ENCODE measurements at regions of chr12 and their contacts with region 1.

Region 1: GRCh38 chr12:14167005-14167628 is 185.7 kb upstream of the GRIN2B start:
- ATAC-seq: peak; percentile 40 to 65 (median 51)
- H3K4me3 ChIP-seq: no peak overlapping the region
- H3K27ac ChIP-seq: no peak overlapping the region
- H3K4me1 ChIP-seq: no peaks in the 10 kb centered on the region

Region 2: DNA sequence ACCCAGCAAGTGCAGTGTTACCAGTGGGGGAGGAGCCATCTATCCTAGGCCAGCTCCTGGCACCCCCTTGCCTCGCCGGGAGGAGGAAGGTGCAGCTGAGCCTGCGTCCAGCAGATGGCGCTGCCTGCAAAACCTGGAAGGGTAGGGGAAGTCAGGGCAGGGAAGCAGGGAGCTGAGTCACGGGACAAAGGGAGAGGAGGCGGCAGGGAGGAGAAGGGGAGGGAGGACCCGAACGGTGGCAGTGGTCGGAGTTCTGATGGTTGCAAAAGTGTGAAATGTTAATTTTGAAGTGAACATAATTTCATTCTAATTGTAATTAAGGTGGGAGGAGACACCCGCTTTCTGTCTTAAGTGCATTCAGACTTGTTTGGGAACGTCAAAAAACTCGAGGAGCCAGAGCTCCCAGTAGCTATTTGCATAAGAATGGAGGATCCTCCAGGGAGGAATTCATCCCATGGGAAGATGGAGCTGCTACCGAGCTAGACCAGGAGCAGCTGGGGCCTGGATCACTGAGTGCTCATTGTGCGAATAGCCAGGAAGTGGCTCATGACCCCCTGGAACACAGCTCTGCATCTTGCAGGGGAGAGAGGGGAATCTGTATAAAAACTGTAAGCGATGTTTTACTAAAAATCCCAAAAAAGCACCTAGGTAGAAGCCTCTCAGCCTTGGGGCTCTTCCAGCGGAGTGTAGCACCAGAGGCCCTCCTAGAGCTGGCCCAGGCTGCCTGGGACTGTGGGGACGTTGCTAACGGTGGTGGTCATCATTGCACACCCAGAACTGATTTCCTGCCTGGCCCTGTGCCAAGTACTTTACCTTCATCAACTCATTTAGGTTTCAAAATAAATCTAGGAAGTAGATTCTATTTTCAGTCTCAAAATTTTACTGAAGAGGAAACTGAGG is 911.1 kb before region 1 on chr12:
- in situ Hi-C with region 1: loop called in 1 of 9 experiments (anchors 25 kb)
- ATAC-seq: peak; percentile 95 to 100 (median 98)
- H3K4me3 ChIP-seq: peak overlapping the region; percentile 8 to 33 (median 27)
- H3K27ac ChIP-seq: peak overlapping the region; percentile 40 to 58
- H3K4me1 ChIP-seq: peaks cover 17 to 29% of the 10 kb centered on the region in 2 donors

Region 3: DNA sequence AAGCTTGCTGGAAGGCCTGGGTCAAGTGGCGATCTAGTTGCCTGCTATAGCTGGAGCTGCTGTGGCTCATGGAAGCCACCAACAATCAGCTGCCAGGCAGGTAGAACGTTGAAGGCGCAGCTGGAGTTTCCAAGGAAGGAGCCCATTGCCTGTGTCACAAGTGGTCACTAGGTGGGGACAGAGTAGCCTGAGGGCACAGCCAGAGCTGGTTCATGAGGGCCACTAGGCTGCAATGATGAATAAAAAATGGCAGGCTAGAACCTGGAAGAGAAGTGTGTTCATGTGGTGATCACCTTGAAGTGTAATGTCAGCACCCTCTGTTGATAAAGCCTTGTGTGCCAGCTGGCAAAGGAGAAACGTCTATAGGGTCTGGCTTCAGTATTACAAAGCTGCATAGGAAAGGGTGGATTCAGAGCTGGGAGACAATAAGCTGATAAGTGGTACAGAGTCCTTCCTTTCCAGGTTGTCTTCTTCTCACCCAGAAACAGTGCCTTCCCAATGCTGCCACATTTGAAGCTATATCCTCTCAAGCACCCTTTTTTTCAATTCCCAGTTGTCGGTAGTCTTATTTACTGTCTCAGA is 804.8 kb before region 1 on chr12:
- in situ Hi-C with region 1: no loop called
- ATAC-seq: peak in 5 of 8 experiments; percentile 41 to 97 (median 87)
- H3K4me3 ChIP-seq: no peak overlapping the region
- H3K27ac ChIP-seq: no peak overlapping the region
- H3K4me1 ChIP-seq: no peaks in the 10 kb centered on the region

Region 4: DNA sequence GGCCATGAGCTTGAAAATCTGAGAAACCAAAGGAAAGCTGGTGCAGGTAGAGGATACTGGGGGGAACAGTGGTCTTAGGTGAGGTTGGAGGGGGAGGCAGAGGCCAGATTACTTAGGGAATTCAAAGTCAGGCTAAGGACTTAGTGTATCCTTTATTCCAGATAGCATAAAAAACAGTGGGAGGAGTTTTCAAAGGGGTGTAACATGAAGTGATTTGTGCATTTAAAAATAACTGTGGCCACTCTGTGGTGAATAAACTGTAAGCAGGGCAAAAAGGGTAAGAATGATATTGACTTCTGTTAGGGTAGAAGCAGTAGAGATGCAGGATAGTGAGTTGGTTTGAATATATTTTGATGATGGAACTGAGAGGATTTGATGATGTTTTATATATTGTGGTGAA is 657.4 kb before region 1 on chr12:
- in situ Hi-C with region 1: no loop called
- ATAC-seq: peak in 2 of 8 experiments; percentile 55 to 67
- H3K4me3 ChIP-seq: no peak overlapping the region
- H3K27ac ChIP-seq: no peak overlapping the region
- H3K4me1 ChIP-seq: peaks cover 7 to 11% of the 10 kb centered on the region in 2 donors

Region 5: GRCh38 chr12:13727707-13728195 is 439.4 kb before region 1 on chr12:
- in situ Hi-C with region 1: loop called in 3 of 9 experiments (anchors 25 kb)
- ATAC-seq: peak; percentile 68 to 95 (median 94)
- H3K4me3 ChIP-seq: no peak overlapping the region
- H3K27ac ChIP-seq: no peak overlapping the region
- H3K4me1 ChIP-seq: peaks cover 11 to 15% of the 10 kb centered on the region in 2 donors

Region 6: GRCh38 chr12:13745111-13745685 is 421.9 kb before region 1 on chr12:
- in situ Hi-C with region 1: loop called in 4 of 9 experiments (anchors 10 to 25 kb)
- ATAC-seq: peak in 4 of 8 experiments; percentile 18 to 42 (median 34)
- H3K4me3 ChIP-seq: no peak overlapping the region
- H3K27ac ChIP-seq: no peak overlapping the region
- H3K4me1 ChIP-seq: peaks cover 42 to 63% of the 10 kb centered on the region in 2 donors

Region 7: GRCh38 chr12:13864081-13864673 is 302.9 kb before region 1 on chr12:
- in situ Hi-C with region 1: loop called in 2 of 9 experiments (anchors 10 to 25 kb)
- ATAC-seq: peak; percentile 74 to 95 (median 84)
- H3K4me3 ChIP-seq: no peak overlapping the region
- H3K27ac ChIP-seq: no peak overlapping the region
- H3K4me1 ChIP-seq: peaks cover 0 to 6% of the 10 kb centered on the region in 2 donors

Region 8: DNA sequence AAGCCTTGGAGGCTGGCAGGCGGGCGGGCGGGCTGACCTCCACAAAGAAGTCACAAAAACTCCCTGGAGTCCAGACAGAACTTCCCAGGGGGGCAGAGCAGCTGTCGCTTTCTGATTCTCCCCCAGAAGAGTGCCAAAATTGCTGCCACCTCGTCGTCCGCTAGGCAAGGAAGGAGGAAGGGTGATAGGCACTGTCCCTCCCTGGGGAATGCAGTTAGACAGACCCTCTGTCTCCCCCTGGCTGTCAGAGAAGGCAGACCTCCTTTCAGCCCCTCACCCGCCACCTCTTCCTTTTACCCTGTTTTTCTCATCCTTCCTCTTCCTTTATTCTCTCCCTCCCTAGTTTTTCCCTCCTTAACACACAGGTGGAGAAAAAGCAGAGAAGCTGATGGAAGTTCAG is 204.4 kb before region 1 on chr12:
- in situ Hi-C with region 1: loop called in 1 of 9 experiments (anchors 25 kb)
- ATAC-seq: peak in 1 of 8 experiments; percentile 56
- H3K4me3 ChIP-seq: no peak overlapping the region
- H3K27ac ChIP-seq: no peak overlapping the region
- H3K4me1 ChIP-seq: peaks cover 0 to 9% of the 10 kb centered on the region in 2 donors

Region 9: DNA sequence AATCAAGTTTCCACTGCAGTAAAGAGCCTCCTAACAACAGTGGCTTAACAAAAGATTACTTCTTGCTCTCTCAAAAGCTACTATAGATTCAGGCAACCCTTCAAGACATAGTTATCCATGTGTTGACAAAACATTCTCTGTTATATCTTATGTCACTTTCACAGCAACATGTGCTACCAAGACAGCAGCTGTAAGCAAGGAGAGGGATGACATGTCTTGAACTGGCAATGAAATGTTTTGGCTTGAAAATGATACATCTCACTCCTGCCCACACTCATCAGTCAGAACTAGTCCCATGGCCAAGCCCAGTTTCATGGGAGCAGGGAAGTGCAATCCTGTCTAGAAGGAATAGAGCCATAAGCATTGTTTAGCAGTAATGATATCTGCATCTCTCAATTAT is 175.0 kb before region 1 on chr12:
- in situ Hi-C with region 1: no loop called
- ATAC-seq: no peak
- H3K4me3 ChIP-seq: no peak overlapping the region
- H3K27ac ChIP-seq: no peak overlapping the region
- H3K4me1 ChIP-seq: no peaks in the 10 kb centered on the region